A673 (cell line): ENCODE measurements at regions of chr2 and their contacts with region 1.

Region 1: GRCh38 chr2:172465417-172466334 is 38.3 kb downstream of the ITGA6 start:
- DNase-seq: peak; percentile 85
- H3K4me3 ChIP-seq: peak overlapping the region; percentile 28
- H3K27ac ChIP-seq: no peak overlapping the region
- H3K4me1 ChIP-seq: peaks cover 16% of the 10 kb centered on the region
- H3K27me3 ChIP-seq: no peaks in the 10 kb centered on the region
- CTCF ChIP-seq: peak; percentile 96

Region 2: GRCh38 chr2:171574149-171574795 is 891.4 kb before region 1 on chr2:
- CTCF ChIA-PET with region 1: no interaction called
- POLR2A ChIA-PET with region 1: no interaction called
- intact Hi-C with region 1: loop called (anchors 5 kb)
- DNase-seq: peak; percentile 83
- H3K4me3 ChIP-seq: no peak overlapping the region
- H3K27ac ChIP-seq: no peak overlapping the region
- H3K4me1 ChIP-seq: no peaks in the 10 kb centered on the region
- H3K27me3 ChIP-seq: no peaks in the 10 kb centered on the region
- CTCF ChIP-seq: peak; percentile 97

Region 3: DNA sequence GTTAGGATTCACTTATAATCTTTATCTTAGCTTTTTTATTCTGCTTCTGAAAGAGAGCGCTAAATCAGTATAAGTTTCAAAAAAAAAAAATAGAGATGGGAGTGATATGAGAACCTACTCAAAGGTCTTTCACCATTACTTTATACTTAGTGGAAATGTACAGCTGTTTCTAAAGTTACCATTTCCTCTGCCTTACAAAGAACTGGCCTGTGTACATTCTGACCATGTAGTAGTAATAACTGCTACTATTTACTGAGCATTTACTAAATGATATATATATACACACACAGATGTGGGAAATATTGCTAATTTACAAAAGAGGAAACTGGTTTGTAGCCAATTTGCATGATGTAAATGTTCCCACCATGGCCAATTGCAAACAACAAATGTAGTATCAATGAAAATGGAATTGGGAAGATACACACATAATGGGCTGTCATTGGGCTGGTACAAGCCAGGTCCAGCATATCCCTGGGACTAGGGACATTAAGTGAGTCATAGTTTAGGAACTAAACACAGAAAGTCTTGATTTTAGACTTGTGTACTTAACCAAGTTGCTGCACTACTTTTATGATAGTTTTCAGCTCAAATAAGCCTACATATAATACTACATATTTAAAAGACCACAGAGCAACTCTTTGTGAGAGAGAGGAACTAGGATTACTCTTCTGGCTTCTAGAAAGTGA is 711.3 kb before region 1 on chr2:
- CTCF ChIA-PET with region 1: no interaction called
- POLR2A ChIA-PET with region 1: no interaction called
- intact Hi-C with region 1: no loop called
- DNase-seq: no peak
- H3K4me3 ChIP-seq: no peak overlapping the region
- H3K27ac ChIP-seq: no peak overlapping the region
- H3K4me1 ChIP-seq: no peaks in the 10 kb centered on the region
- H3K27me3 ChIP-seq: no peaks in the 10 kb centered on the region
- CTCF ChIP-seq: no peak

Region 4: DNA sequence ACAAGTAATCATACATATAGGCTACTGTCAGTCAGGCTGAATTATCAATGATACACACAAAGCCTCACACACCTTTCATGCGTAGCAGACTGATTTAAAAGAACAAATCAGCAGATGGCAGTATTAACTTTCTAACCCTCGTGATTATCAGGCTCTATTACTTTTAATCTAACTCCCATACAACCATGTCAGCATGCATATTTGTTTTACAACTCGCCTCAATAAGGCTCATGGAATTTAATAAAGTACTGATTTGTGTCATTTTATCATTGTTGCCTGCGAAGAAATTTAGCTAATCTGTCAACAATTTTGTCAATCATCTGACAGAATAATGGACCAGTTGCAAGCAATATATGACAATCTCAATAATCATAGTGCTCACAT is 654.4 kb before region 1 on chr2:
- CTCF ChIA-PET with region 1: no interaction called
- POLR2A ChIA-PET with region 1: no interaction called
- intact Hi-C with region 1: loop called (anchors 10 kb)
- DNase-seq: peak; percentile 67
- H3K4me3 ChIP-seq: no peak overlapping the region
- H3K27ac ChIP-seq: no peak overlapping the region
- H3K4me1 ChIP-seq: peaks cover 18% of the 10 kb centered on the region
- H3K27me3 ChIP-seq: no peaks in the 10 kb centered on the region
- CTCF ChIP-seq: peak; percentile 64

Region 5: GRCh38 chr2:172131713-172132555 is 333.7 kb before region 1 on chr2:
- CTCF ChIA-PET with region 1: interaction called, 6 read pairs
- POLR2A ChIA-PET with region 1: no interaction called
- intact Hi-C with region 1: loop called (anchors 5 kb)
- DNase-seq: no peak
- H3K4me3 ChIP-seq: no peak overlapping the region
- H3K27ac ChIP-seq: no peak overlapping the region
- H3K4me1 ChIP-seq: no peaks in the 10 kb centered on the region
- H3K27me3 ChIP-seq: no peaks in the 10 kb centered on the region
- CTCF ChIP-seq: no peak

Region 6: DNA sequence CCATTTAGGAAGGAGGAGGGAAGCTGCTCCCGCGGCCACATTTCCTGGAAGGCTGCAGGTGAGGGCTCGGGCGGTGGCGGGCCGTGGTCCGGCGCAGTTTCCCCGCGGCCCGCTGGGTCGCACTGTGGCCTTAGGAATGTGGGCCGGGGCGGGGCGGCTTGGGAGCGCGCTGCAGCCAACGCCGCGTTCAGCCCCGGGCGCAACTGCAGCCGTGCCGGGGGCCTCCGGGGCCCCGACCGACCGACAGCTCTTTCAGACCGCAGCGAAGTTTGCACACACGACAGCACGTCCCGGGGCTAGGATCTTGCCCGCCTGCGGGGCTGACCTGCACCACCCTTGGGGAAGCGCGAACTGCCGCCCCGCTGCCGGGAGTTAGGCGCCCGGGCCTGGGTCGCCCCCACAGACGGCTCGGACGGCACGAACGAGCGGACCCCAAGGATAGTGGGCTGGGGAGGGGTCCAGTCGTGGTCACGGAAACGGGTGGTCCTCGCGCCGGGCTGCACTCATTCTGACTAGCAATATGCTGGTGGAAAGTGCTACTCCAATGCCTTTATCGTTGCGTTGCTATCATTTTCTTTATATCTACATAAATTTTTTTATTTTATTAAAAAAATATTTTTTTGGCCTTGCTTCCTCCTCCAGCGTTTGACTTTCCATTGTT is 293.0 kb before region 1 on chr2:
- CTCF ChIA-PET with region 1: interaction called, 6 read pairs
- POLR2A ChIA-PET with region 1: no interaction called
- intact Hi-C with region 1: loop called (anchors 1 kb)
- DNase-seq: peak; percentile 65
- H3K4me3 ChIP-seq: peak overlapping the region; percentile 49
- H3K27ac ChIP-seq: no peak overlapping the region
- H3K4me1 ChIP-seq: peaks cover 6% of the 10 kb centered on the region
- H3K27me3 ChIP-seq: peaks cover 21% of the 10 kb centered on the region
- CTCF ChIP-seq: peak; percentile 73

Region 7: GRCh38 chr2:172389685-172390339 is 75.9 kb before region 1 on chr2:
- CTCF ChIA-PET with region 1: interaction called, 11 read pairs
- POLR2A ChIA-PET with region 1: no interaction called
- intact Hi-C with region 1: no loop called
- DNase-seq: no peak
- H3K4me3 ChIP-seq: no peak overlapping the region
- H3K27ac ChIP-seq: no peak overlapping the region
- H3K4me1 ChIP-seq: no peaks in the 10 kb centered on the region
- H3K27me3 ChIP-seq: peaks cover 3% of the 10 kb centered on the region
- CTCF ChIP-seq: no peak

Region 8: GRCh38 chr2:172667581-172668325 is 202.1 kb after region 1 on chr2:
- CTCF ChIA-PET with region 1: no interaction called
- POLR2A ChIA-PET with region 1: no interaction called
- intact Hi-C with region 1: no loop called
- DNase-seq: no peak
- H3K4me3 ChIP-seq: no peak overlapping the region
- H3K27ac ChIP-seq: no peak overlapping the region
- H3K4me1 ChIP-seq: no peaks in the 10 kb centered on the region
- H3K27me3 ChIP-seq: no peaks in the 10 kb centered on the region
- CTCF ChIP-seq: no peak

Region 9: DNA sequence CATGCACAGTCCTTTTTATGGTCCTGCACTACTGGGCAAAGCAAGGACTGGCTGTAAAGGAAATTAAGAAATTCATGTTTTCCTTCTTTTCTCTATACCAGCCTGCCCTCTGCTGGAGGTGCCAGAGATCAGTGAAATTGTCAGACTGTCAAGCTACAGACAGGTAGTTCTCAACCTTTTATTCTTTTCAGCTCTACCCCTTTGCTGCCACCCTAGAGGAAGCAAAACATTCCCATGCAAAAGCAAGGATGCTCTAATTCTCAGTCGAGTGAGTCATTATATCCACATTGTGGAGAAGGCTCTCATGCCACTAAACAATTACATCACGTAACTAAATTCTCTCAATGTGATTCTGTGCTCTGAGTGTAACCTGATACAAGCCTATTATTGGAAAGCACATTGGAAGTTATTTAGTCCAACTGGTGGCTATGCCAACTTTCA is 244.9 kb after region 1 on chr2:
- CTCF ChIA-PET with region 1: no interaction called
- POLR2A ChIA-PET with region 1: no interaction called
- intact Hi-C with region 1: loop called (anchors 2 kb)
- DNase-seq: peak; percentile 47
- H3K4me3 ChIP-seq: no peak overlapping the region
- H3K27ac ChIP-seq: no peak overlapping the region
- H3K4me1 ChIP-seq: no peaks in the 10 kb centered on the region
- H3K27me3 ChIP-seq: peaks cover 42% of the 10 kb centered on the region
- CTCF ChIP-seq: peak; percentile 75

Region 10: GRCh38 chr2:173432049-173432754 is 966.5 kb after region 1 on chr2:
- CTCF ChIA-PET with region 1: no interaction called
- POLR2A ChIA-PET with region 1: no interaction called
- intact Hi-C with region 1: no loop called
- DNase-seq: no peak
- H3K4me3 ChIP-seq: no peak overlapping the region
- H3K27ac ChIP-seq: no peak overlapping the region
- H3K4me1 ChIP-seq: no peaks in the 10 kb centered on the region
- H3K27me3 ChIP-seq: peaks cover 11% of the 10 kb centered on the region
- CTCF ChIP-seq: no peak